CD4-positive, alpha-beta memory T cell (primary cell): ENCODE measurements at regions of chr2 and their contacts with region 1.

Region 1: DNA sequence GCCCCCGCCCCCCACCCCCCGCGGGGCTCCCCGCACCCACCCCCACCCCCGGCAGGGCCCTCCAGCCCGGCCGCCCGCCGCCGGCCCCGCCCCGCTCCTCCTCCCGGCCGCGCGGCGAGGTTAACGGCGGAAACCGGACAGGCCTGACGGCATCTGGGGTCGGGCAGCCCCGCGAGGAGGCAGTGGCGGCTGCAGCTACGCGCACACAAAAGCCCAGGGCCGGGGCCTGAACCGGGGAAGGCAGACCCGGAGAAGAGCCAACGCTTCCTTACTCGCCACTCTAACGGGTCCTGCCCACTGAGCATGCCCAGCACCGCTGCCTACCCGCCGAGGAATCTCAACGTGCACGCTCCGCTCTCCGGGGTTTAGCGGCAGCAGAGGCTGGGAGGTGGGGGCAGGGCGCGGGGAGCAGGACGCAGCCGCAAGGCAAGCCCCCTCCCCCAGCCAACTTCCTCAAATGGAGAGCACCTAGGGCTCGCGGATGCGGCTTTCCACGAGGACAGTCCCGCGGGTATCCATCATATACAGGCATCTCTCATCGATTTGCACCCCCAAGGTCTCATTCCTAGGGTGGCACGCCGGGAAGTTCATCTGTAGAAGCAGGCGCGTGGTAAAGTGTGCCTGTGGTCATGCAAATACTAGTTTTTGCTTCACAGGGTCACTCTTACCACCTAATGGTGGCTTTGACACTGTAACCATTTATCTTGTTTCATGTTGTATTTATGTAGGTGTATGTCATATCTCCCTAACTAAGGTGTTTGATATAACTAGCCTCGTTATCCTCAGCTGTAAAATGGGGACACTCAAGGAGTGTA is at the start of gene MEMO1:
- DNase-seq: peak; percentile 91 to 94 (median 93)
- H3K4me3 ChIP-seq: peak within 1 kb of the TSS; percentile 80 to 88
- H3K4me3 Mint-ChIP-seq: peak within 1 kb of the TSS; percentile 87 to 96 (median 88)
- H3K27ac ChIP-seq: peak within 1 kb of the TSS; percentile 74
- H3K27ac Mint-ChIP-seq: peak within 1 kb of the TSS; percentile 87 to 96 (median 95)
- H3K4me1 ChIP-seq: peaks cover 41% of the 10 kb centered on the region
- H3K4me1 Mint-ChIP-seq: peaks cover 27 to 48% (median 35%) of the 10 kb centered on the region in 4 donors
- H3K27me3 ChIP-seq: no peaks in the 10 kb centered on the region
- H3K27me3 Mint-ChIP-seq: no peaks in the 10 kb centered on the region
- total RNA-seq, gene MEMO1: 42.0 to 45.1 TPM

Region 2: DNA sequence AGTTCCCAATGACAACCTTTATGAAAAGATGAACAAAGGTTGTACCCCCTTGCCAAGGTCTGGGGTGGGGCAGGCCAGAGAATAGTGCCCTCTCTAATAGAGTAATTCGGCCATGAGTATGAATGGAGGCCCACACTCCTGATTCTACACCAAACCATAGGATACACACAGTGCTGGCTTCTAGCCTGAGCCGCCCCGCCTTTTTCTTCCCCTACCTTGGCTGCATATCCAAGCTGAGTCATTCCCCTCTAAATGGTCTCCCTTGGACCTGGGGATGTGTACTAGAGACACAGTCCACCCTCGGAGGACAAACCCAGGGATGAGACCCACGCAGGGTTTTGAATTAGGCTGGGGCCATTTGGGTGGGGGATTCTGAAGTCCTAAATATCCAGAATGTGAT is 1096.4 kb before region 1 on chr2:
- CTCF ChIA-PET with region 1: no interaction called
- POLR2A ChIA-PET with region 1: no interaction called
- intact Hi-C with region 1: no loop called
- DNase-seq: no peak
- H3K4me3 ChIP-seq: no peak overlapping the region
- H3K4me3 Mint-ChIP-seq: no peak overlapping the region
- H3K27ac ChIP-seq: no peak overlapping the region
- H3K27ac Mint-ChIP-seq: no peak overlapping the region
- H3K4me1 ChIP-seq: no peaks in the 10 kb centered on the region
- H3K4me1 Mint-ChIP-seq: no peaks in the 10 kb centered on the region
- H3K27me3 ChIP-seq: no peaks in the 10 kb centered on the region
- H3K27me3 Mint-ChIP-seq: peaks cover 3 to 5% of the 10 kb centered on the region in 2 donors

Region 3: GRCh38 chr2:31957354-31958139 is 53.3 kb before region 1 on chr2:
- CTCF ChIA-PET with region 1: no interaction called
- POLR2A ChIA-PET with region 1: no interaction called
- intact Hi-C with region 1: loop called (anchors 10 kb)
- DNase-seq: no peak
- H3K4me3 ChIP-seq: no peak overlapping the region
- H3K4me3 Mint-ChIP-seq: peak overlapping the region in 6 of 8 donors; percentile 17 to 62 (median 30)
- H3K27ac ChIP-seq: no peak overlapping the region
- H3K27ac Mint-ChIP-seq: peak overlapping the region in 6 of 7 donors; percentile 19 to 70 (median 40)
- H3K4me1 ChIP-seq: peaks cover 43% of the 10 kb centered on the region
- H3K4me1 Mint-ChIP-seq: peaks cover 36 to 63% (median 45%) of the 10 kb centered on the region in 4 donors
- H3K27me3 ChIP-seq: no peaks in the 10 kb centered on the region
- H3K27me3 Mint-ChIP-seq: no peaks in the 10 kb centered on the region

Region 4: GRCh38 chr2:31992025-31992566 is 18.8 kb before region 1 on chr2:
- CTCF ChIA-PET with region 1: no interaction called
- POLR2A ChIA-PET with region 1: no interaction called
- intact Hi-C with region 1: loop called (anchors 2 kb)
- DNase-seq: no peak
- H3K4me3 ChIP-seq: no peak overlapping the region
- H3K4me3 Mint-ChIP-seq: no peak overlapping the region
- H3K27ac ChIP-seq: no peak overlapping the region
- H3K27ac Mint-ChIP-seq: no peak overlapping the region
- H3K4me1 ChIP-seq: peaks cover 14% of the 10 kb centered on the region
- H3K4me1 Mint-ChIP-seq: peaks cover 33 to 61% (median 42%) of the 10 kb centered on the region in 4 donors
- H3K27me3 ChIP-seq: no peaks in the 10 kb centered on the region
- H3K27me3 Mint-ChIP-seq: no peaks in the 10 kb centered on the region

Region 5: GRCh38 chr2:32039447-32040219 is 28.8 kb after region 1 on chr2 and contains the start of gene DPY30:
- CTCF ChIA-PET with region 1: interaction called, 10 read pairs
- POLR2A ChIA-PET with region 1: interaction called, 20 read pairs
- intact Hi-C with region 1: loop called (anchors 1 kb)
- DNase-seq: peak; percentile 90 to 91 (median 90)
- H3K4me3 ChIP-seq: peak within 1 kb of the TSS; percentile 77 to 98
- H3K4me3 Mint-ChIP-seq: peak within 1 kb of the TSS; percentile 88 to 99 (median 92)
- H3K27ac ChIP-seq: peak within 1 kb of the TSS; percentile 63
- H3K27ac Mint-ChIP-seq: peak within 1 kb of the TSS; percentile 92 to 98 (median 97)
- H3K4me1 ChIP-seq: peaks cover 13% of the 10 kb centered on the region
- H3K4me1 Mint-ChIP-seq: peaks cover 12 to 26% (median 18%) of the 10 kb centered on the region in 4 donors
- H3K27me3 ChIP-seq: no peaks in the 10 kb centered on the region
- H3K27me3 Mint-ChIP-seq: peaks cover 0 to 2% of the 10 kb centered on the region in 2 donors
- total RNA-seq, gene DPY30: 50.0 to 51.3 TPM

Region 6: GRCh38 chr2:32063310-32064161 is 52.7 kb after region 1 on chr2 and contains the start of gene SPAST:
- CTCF ChIA-PET with region 1: interaction called, 7 read pairs
- POLR2A ChIA-PET with region 1: interaction called, 33 read pairs
- intact Hi-C with region 1: loop called (anchors 1 kb)
- DNase-seq: peak; percentile 96 to 97 (median 97)
- H3K4me3 ChIP-seq: peak within 1 kb of the TSS; percentile 93 to 94
- H3K4me3 Mint-ChIP-seq: peak within 1 kb of the TSS; percentile 98 to 99 (median 99)
- H3K27ac ChIP-seq: peak within 1 kb of the TSS; percentile 77
- H3K27ac Mint-ChIP-seq: peak within 1 kb of the TSS; percentile 89 to 98 (median 97)
- H3K4me1 ChIP-seq: peaks cover 41% of the 10 kb centered on the region
- H3K4me1 Mint-ChIP-seq: peaks cover 11 to 43% (median 31%) of the 10 kb centered on the region in 4 donors
- H3K27me3 ChIP-seq: no peaks in the 10 kb centered on the region
- H3K27me3 Mint-ChIP-seq: no peaks in the 10 kb centered on the region
- total RNA-seq, gene SPAST: 22.5 to 23.2 TPM

Region 7: DNA sequence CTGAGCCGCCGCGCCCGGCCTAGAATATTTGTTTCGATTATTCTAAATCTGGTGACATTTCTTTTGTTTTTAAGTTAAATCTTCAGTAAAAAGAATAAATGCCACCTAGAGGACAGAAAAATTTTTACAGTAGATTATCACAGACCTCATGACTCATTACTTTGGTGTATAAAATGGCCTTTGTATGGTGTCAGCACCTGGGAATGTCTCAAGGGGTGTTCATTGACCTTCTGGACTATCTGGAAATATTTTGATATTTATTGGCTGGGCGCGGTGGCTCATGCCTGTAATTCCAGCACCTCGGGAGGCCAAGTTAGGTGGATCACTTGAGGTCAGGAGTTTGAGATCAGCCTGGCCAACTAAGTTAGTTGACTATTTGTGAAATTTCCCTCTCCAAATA is 124.5 kb after region 1 on chr2:
- CTCF ChIA-PET with region 1: no interaction called
- POLR2A ChIA-PET with region 1: no interaction called
- intact Hi-C with region 1: loop called (anchors 10 kb)
- DNase-seq: peak in 4 of 5 donors; percentile 5 to 19 (median 6)
- H3K4me3 ChIP-seq: no peak overlapping the region
- H3K4me3 Mint-ChIP-seq: no peak overlapping the region
- H3K27ac ChIP-seq: no peak overlapping the region
- H3K27ac Mint-ChIP-seq: peak overlapping the region in 3 of 7 donors; percentile 29 to 70 (median 42)
- H3K4me1 ChIP-seq: no peaks in the 10 kb centered on the region
- H3K4me1 Mint-ChIP-seq: peaks cover 0 to 3% (median 0%) of the 10 kb centered on the region in 4 donors
- H3K27me3 ChIP-seq: no peaks in the 10 kb centered on the region
- H3K27me3 Mint-ChIP-seq: no peaks in the 10 kb centered on the region

Region 8: GRCh38 chr2:32168513-32168912 is 157.6 kb after region 1 on chr2:
- CTCF ChIA-PET with region 1: no interaction called
- POLR2A ChIA-PET with region 1: interaction called, 7 read pairs
- intact Hi-C with region 1: loop called (anchors 2 kb)
- DNase-seq: no peak
- H3K4me3 ChIP-seq: no peak overlapping the region
- H3K4me3 Mint-ChIP-seq: peak overlapping the region in 1 of 8 donors; percentile 33
- H3K27ac ChIP-seq: no peak overlapping the region
- H3K27ac Mint-ChIP-seq: peak overlapping the region in 1 of 7 donors; percentile 38
- H3K4me1 ChIP-seq: peaks cover 23% of the 10 kb centered on the region
- H3K4me1 Mint-ChIP-seq: peaks cover 30 to 56% (median 46%) of the 10 kb centered on the region in 4 donors
- H3K27me3 ChIP-seq: no peaks in the 10 kb centered on the region
- H3K27me3 Mint-ChIP-seq: no peaks in the 10 kb centered on the region

Region 9: DNA sequence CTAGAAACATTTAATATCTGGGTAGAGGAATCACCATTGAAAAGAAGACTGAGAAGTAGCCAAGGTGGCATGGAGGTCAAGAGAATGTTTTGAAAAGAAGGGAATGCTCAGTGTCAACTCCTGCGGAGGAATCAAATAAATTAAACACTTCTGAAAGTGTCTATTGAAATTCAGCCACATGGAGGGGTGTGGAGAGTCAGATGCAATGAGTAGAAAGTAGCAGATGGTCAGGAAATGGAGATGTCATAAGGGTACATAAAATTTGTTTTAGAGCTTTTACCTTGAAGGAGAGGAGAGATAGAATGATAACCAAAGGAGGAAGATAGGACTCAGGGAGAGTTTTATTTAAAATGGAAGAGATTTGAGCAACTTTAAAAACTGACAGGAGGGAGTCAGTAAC is 218.8 kb after region 1 on chr2:
- CTCF ChIA-PET with region 1: no interaction called
- POLR2A ChIA-PET with region 1: no interaction called
- intact Hi-C with region 1: no loop called
- DNase-seq: no peak
- H3K4me3 ChIP-seq: no peak overlapping the region
- H3K4me3 Mint-ChIP-seq: no peak overlapping the region
- H3K27ac ChIP-seq: no peak overlapping the region
- H3K27ac Mint-ChIP-seq: peak overlapping the region in 1 of 7 donors; percentile 15
- H3K4me1 ChIP-seq: no peaks in the 10 kb centered on the region
- H3K4me1 Mint-ChIP-seq: peaks cover 0 to 1% (median 0%) of the 10 kb centered on the region in 4 donors
- H3K27me3 ChIP-seq: no peaks in the 10 kb centered on the region
- H3K27me3 Mint-ChIP-seq: no peaks in the 10 kb centered on the region